ENCODE measurements at regions of chr7 and their contacts with region 1.

Region 1: GRCh38 chr7:116499168-116500077 is at the start of gene CAV2:
- DNase-seq: no peak
- H3K4me3 Mint-ChIP-seq: peak within 1 kb of the TSS; percentile 45
- H3K27ac Mint-ChIP-seq: no peak within 1 kb of the TSS
- H3K4me1 Mint-ChIP-seq: peaks cover 9% of the 10 kb centered on the region
- H3K27me3 Mint-ChIP-seq: peaks cover 56% of the 10 kb centered on the region
- total RNA-seq, gene CAV2: not detected in 2 replicates

Region 2: GRCh38 chr7:116327752-116328151 is 171.7 kb before region 1 on chr7:
- intact Hi-C with region 1: no loop called
- DNase-seq: no peak
- H3K4me3 Mint-ChIP-seq: no peak overlapping the region
- H3K27ac Mint-ChIP-seq: no peak overlapping the region
- H3K4me1 Mint-ChIP-seq: no peaks in the 10 kb centered on the region
- H3K27me3 Mint-ChIP-seq: peaks cover 14% of the 10 kb centered on the region

Region 3: DNA sequence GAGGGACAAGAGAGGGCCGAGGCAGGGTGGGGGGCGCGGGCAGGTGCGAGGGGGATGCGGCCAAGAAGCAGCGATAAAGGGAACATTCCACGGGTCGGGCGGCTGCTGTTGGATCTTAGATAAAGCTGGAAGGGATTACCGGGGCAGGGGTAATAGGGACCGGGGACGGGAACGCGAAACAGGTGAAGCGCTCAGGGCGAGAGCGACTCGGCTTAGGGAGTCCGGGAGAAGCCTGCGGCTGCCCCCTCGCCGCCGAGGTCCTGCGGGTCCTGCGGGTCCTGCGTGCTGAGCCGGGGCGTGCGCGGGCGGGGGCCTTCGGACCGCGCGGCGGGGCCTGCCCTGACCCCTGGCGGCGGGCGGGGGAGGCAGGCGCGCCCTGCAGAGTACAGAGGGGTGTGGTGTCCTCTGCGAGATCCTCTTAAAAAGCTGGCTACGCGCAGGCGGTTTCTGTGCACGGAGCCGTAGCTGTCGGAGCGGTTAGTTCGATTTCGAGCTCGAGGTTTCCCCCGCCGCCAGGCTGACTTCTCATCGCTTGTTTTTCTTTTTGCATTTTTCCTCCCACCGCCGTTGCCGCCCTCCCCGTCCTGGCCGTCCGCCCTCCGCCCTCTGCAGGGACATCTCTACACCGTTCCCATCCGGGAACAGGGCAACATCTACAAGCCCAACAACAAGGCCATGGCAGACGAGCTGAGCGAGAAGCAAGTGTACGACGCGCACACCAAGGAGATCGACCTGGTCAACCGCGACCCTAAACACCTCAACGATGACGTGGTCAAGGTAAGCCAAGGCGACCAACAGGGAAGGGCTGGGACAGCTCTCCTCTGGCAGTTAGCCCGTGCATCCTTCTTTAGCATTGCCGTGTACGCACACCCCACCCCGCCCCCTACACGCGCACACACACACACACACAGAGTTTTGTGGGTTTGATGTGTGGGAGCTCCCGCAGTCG is 26.8 kb after region 1 on chr7:
- intact Hi-C with region 1: loop called (anchors 1 kb)
- DNase-seq: peak; percentile 89
- H3K4me3 Mint-ChIP-seq: peak overlapping the region; percentile 88
- H3K27ac Mint-ChIP-seq: peak overlapping the region; percentile 67
- H3K4me1 Mint-ChIP-seq: peaks cover 27% of the 10 kb centered on the region
- H3K27me3 Mint-ChIP-seq: peaks cover 81% of the 10 kb centered on the region